Activated B cell treated with CpG ODN at 0.5 μM for 24 hours (primary cell): ENCODE measurements at regions of chr4 and their contacts with region 1.

Region 1: DNA sequence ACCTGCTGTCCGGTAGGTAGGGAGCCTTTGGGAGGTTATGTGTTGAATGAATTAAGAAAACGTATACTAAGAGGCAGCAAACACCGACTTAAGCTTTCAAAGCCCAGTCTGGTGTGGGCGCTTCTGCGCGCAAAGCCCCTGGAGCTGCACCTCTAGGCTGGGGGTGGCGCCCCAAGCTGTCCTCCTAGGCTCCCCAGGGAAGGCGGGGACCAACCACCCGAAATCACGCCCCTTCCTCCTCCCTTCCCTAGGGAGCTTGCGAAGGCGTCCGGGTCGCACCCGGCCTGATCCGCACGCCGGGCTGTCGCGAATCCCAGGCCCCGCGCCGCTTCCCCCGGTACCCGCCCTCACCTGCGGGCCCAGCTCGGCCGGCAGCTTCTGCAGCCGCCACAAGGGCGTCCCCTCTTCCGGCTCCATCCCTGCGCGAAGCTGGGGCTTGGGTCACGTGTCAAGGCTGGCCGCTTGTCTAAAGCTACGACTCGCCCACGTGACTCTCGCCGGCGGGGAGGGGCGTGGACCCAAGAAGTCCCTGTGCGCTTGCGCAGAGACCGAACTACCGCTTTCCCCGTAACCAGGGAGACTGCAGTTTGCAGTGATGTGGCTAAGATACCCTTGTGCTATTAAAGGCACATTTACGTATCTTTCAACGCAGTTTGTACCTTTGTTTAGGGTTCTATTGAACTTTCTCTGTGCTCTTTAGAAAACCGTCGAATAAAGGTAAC is at the start of gene COMMD8:
- DNase-seq: peak; percentile 94
- ATAC-seq: peak; percentile 79
- H3K4me3 Mint-ChIP-seq: peak within 1 kb of the TSS; percentile 90
- H3K27ac Mint-ChIP-seq: peak within 1 kb of the TSS; percentile 92
- H3K4me1 Mint-ChIP-seq: peaks cover 57% of the 10 kb centered on the region
- H3K27me3 Mint-ChIP-seq: no peaks in the 10 kb centered on the region
- CTCF ChIP-seq: no peak
- total RNA-seq, gene COMMD8: 23.6 and 23.9 TPM in 2 replicates

Region 2: DNA sequence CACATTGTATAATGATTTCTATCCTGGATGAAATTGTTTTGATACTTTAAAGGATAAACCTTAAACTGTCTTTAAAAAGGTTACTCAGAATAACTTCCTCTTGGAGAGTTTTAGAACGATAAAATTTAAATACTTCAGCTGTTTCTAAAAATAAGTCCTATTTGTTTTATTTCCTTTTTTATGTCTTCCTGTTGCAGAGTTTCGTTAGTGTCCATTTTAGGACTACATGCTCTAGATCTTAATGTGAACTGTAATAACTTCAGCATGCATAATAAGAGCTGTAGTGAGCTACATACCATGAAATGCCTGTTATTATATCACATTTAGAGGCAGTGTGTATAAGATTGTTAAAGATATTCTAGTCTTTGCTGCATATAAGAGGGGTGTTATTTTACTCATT is 36.3 kb after region 1 on chr4:
- CTCF ChIA-PET with region 1: interaction called, 3 read pairs
- POLR2A ChIA-PET with region 1: interaction called, 8 read pairs
- intact Hi-C with region 1: loop called (anchors 1 kb)
- DNase-seq: no peak
- ATAC-seq: peak; percentile 76
- H3K4me3 Mint-ChIP-seq: no peak overlapping the region
- H3K27ac Mint-ChIP-seq: no peak overlapping the region
- H3K4me1 Mint-ChIP-seq: peaks cover 12% of the 10 kb centered on the region
- H3K27me3 Mint-ChIP-seq: no peaks in the 10 kb centered on the region
- CTCF ChIP-seq: no peak

Region 3: DNA sequence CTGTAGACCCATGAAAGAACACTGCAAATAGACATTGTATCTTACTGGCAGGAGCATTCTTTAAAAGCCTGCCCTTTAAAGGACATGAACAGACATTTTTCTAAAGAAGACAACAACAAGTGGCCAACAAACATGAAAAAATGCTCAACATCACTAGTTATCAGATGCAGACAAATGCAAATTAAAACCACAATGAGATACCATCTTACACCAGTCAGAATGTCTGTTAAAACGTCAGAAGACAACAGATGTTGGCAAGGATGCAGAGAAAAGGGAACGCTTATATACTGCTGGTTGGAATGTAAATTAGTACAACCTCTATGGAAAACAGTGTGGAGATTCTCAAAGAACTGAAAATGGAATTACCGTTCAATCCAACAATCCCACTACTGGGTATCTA is 98.9 kb after region 1 on chr4:
- CTCF ChIA-PET with region 1: interaction called, 20 read pairs
- POLR2A ChIA-PET with region 1: interaction called, 14 read pairs
- intact Hi-C with region 1: loop called (anchors 1 kb)
- DNase-seq: no peak
- ATAC-seq: no peak
- H3K4me3 Mint-ChIP-seq: no peak overlapping the region
- H3K27ac Mint-ChIP-seq: no peak overlapping the region
- H3K4me1 Mint-ChIP-seq: peaks cover 10% of the 10 kb centered on the region
- H3K27me3 Mint-ChIP-seq: no peaks in the 10 kb centered on the region
- CTCF ChIP-seq: no peak

Region 4: GRCh38 chr4:47914220-47914925 is 451.0 kb after region 1 on chr4 and contains the start of gene NFXL1:
- CTCF ChIA-PET with region 1: no interaction called
- POLR2A ChIA-PET with region 1: no interaction called
- intact Hi-C with region 1: loop called (anchors 1 kb)
- DNase-seq: peak; percentile 90
- ATAC-seq: peak; percentile 96
- H3K4me3 Mint-ChIP-seq: peak within 1 kb of the TSS; percentile 98
- H3K27ac Mint-ChIP-seq: peak within 1 kb of the TSS; percentile 92
- H3K4me1 Mint-ChIP-seq: peaks cover 31% of the 10 kb centered on the region
- H3K27me3 Mint-ChIP-seq: no peaks in the 10 kb centered on the region
- CTCF ChIP-seq: no peak
- total RNA-seq, gene NFXL1: 10.0 and 11.1 TPM in 2 replicates

Region 5: GRCh38 chr4:48269861-48270522 is 806.6 kb after region 1 on chr4:
- CTCF ChIA-PET with region 1: no interaction called
- POLR2A ChIA-PET with region 1: no interaction called
- intact Hi-C with region 1: loop called (anchors 1 kb)
- DNase-seq: peak; percentile 88
- ATAC-seq: peak; percentile 90
- H3K4me3 Mint-ChIP-seq: peak overlapping the region; percentile 96
- H3K27ac Mint-ChIP-seq: peak overlapping the region; percentile 92
- H3K4me1 Mint-ChIP-seq: peaks cover 39% of the 10 kb centered on the region
- H3K27me3 Mint-ChIP-seq: no peaks in the 10 kb centered on the region
- CTCF ChIP-seq: no peak